ENCODE measurements at regions of chr5 and their contacts with region 1.

Region 1: DNA sequence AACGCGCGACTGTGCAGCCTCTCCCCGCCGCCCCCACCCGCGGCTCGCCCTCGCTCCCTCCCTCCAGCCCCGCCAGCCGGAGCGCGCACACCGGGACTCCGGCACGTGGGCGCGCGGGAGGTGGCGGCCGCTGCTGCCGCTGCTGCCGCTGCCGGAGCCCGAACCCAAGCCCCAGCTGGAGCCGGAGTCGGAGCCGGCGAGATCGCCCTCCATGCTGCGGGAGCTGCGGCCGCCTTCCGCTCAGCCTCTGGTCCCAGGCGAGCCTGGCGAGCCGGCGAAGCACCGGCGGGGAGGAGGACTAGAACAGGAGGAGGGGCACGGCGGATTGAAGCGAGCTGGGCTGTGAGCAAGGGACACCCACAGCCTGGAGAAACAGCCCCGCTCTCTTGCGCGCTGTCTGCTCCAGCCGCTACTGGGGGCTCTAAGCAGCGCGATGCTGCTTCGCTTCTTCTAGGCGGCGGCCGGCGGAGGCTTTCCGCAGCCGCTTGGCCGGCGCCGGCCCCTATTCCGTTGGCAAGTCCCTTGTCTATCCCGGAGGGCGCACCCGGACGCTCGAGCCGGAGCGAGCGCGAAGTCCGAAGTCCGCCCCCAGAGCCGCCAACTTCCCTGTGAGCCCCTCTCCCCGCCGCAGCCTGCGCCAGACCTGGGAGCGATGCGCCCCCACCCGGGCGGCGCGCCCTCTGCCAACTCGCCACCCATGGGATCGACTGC is 598.7 kb upstream of the SGCD start:
- DNase-seq: peak; percentile 44 to 79 (median 70)
- ATAC-seq: peak; percentile 57 to 83 (median 75)
- H3K4me3 ChIP-seq: peak overlapping the region; percentile 5 to 64 (median 59)
- H3K27ac ChIP-seq: peak overlapping the region in 11 of 12 donors; percentile 72 to 89 (median 85)
- H3K4me1 ChIP-seq: peaks cover 0 to 28% (median 6%) of the 10 kb centered on the region in 12 donors
- H3K27me3 ChIP-seq: peaks cover 0 to 49% (median 16%) of the 10 kb centered on the region in 9 donors
- CTCF ChIP-seq: peak in 6 of 12 donors; percentile 11 to 49 (median 28)
- POLR2A ChIP-seq: no peak

Region 2: GRCh38 chr5:154972476-154973080 is 755.7 kb before region 1 on chr5:
- intact Hi-C with region 1: loop called in 4 of 10 experiments (anchors 2 to 5 kb)
- DNase-seq: peak in 4 of 5 donors; percentile 27 to 37 (median 28)
- ATAC-seq: peak; percentile 47 to 78 (median 69)
- H3K4me3 ChIP-seq: no peak overlapping the region
- H3K27ac ChIP-seq: no peak overlapping the region
- H3K4me1 ChIP-seq: peaks cover 0 to 6% (median 0%) of the 10 kb centered on the region in 12 donors
- H3K27me3 ChIP-seq: no peaks in the 10 kb centered on the region
- CTCF ChIP-seq: peak; percentile 43 to 75 (median 57)
- POLR2A ChIP-seq: no peak

Region 3: GRCh38 chr5:155136216-155136850 is 592.0 kb before region 1 on chr5:
- intact Hi-C with region 1: loop called in 6 of 10 experiments (anchors 2 to 5 kb)
- DNase-seq: no peak
- ATAC-seq: peak in 3 of 4 donors; percentile 47 to 58 (median 51)
- H3K4me3 ChIP-seq: no peak overlapping the region
- H3K27ac ChIP-seq: no peak overlapping the region
- H3K4me1 ChIP-seq: peaks cover 0 to 7% (median 0%) of the 10 kb centered on the region in 12 donors
- H3K27me3 ChIP-seq: no peaks in the 10 kb centered on the region
- CTCF ChIP-seq: no peak
- POLR2A ChIP-seq: no peak

Region 4: GRCh38 chr5:155485386-155485785 is 242.9 kb before region 1 on chr5:
- intact Hi-C with region 1: loop called in 3 of 10 experiments (anchors 5 kb)
- DNase-seq: no peak
- ATAC-seq: no peak
- H3K4me3 ChIP-seq: no peak overlapping the region
- H3K27ac ChIP-seq: no peak overlapping the region
- H3K4me1 ChIP-seq: peaks cover 0 to 15% (median 0%) of the 10 kb centered on the region in 12 donors
- H3K27me3 ChIP-seq: no peaks in the 10 kb centered on the region
- CTCF ChIP-seq: no peak
- POLR2A ChIP-seq: no peak

Region 5: GRCh38 chr5:155631116-155631515 is 97.2 kb before region 1 on chr5:
- intact Hi-C with region 1: no loop called
- DNase-seq: no peak
- ATAC-seq: no peak
- H3K4me3 ChIP-seq: no peak overlapping the region
- H3K27ac ChIP-seq: no peak overlapping the region
- H3K4me1 ChIP-seq: no peaks in the 10 kb centered on the region
- H3K27me3 ChIP-seq: no peaks in the 10 kb centered on the region
- CTCF ChIP-seq: no peak
- POLR2A ChIP-seq: no peak

Region 6: DNA sequence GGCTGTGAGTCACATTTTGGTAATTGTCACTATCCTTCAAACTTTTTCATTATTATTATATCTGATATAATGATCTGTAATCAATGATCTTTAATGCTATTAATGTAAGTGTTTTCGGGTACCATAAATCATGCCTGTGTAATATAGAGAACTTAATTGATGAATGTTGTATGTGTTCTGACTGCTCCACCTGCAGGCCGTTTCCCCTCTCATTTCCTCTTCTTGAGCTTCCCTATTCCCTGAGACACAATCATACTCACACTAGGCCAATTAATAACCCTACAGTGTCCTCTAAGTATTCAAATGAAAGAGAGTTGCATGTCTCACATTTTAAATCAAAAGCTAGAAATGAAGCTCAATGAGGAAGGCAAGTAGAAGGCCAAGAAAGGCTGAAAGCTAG is 177.7 kb after region 1 on chr5:
- intact Hi-C with region 1: loop called in 1 of 10 experiments (anchors 10 kb)
- DNase-seq: no peak
- ATAC-seq: no peak
- H3K4me3 ChIP-seq: no peak overlapping the region
- H3K27ac ChIP-seq: no peak overlapping the region
- H3K4me1 ChIP-seq: peaks cover 0 to 19% (median 0%) of the 10 kb centered on the region in 12 donors
- H3K27me3 ChIP-seq: no peaks in the 10 kb centered on the region
- CTCF ChIP-seq: peak in 4 of 12 donors; percentile 5 to 35 (median 13)
- POLR2A ChIP-seq: no peak